Panc1 (cell line): ENCODE measurements at regions of chr1 and their contacts with region 1.

Region 1: GRCh38 chr1:36099681-36100341 is 11.1 kb downstream of the ADPRS start:
- DNase-seq: no peak
- ATAC-seq: peak; percentile 95
- H3K4me3 ChIP-seq: peak overlapping the region in 1 of 2 experiments; percentile 52; a peak in 2 of 4 replicates
- H3K27ac ChIP-seq: peak overlapping the region; percentile 63; the same call in 1 of the 2 replicates
- H3K4me1 ChIP-seq: peaks cover 3% of the 10 kb centered on the region; the same call in 1 of the 2 replicates
- H3K27me3 ChIP-seq: no peaks in the 10 kb centered on the region
- CTCF ChIP-seq: peak; percentile 99

Region 2: GRCh38 chr1:36134505-36135329 is 34.9 kb after region 1 on chr1:
- CTCF ChIA-PET with region 1: interaction called, 12 read pairs
- POLR2A ChIA-PET with region 1: no interaction called
- in situ Hi-C with region 1: no loop called
- intact Hi-C with region 1: loop called (anchors 1 kb)
- DNase-seq: no peak
- ATAC-seq: peak; percentile 80
- H3K4me3 ChIP-seq: no peak overlapping the region
- H3K27ac ChIP-seq: no peak overlapping the region
- H3K4me1 ChIP-seq: peaks cover 3% of the 10 kb centered on the region; the same call in 1 of the 2 replicates
- H3K27me3 ChIP-seq: no peaks in the 10 kb centered on the region
- CTCF ChIP-seq: peak; percentile 87

Region 3: GRCh38 chr1:36187800-36188593 is 88.2 kb after region 1 on chr1:
- CTCF ChIA-PET with region 1: interaction called, 6 read pairs
- POLR2A ChIA-PET with region 1: no interaction called
- in situ Hi-C with region 1: no loop called
- intact Hi-C with region 1: loop called (anchors 5 kb)
- DNase-seq: peak; percentile 81
- ATAC-seq: peak; percentile 97
- H3K4me3 ChIP-seq: peak overlapping the region in 1 of 2 experiments; percentile 21; a peak in 1 of 4 replicates
- H3K27ac ChIP-seq: peak overlapping the region; percentile 82
- H3K4me1 ChIP-seq: peaks cover 9% of the 10 kb centered on the region
- H3K27me3 ChIP-seq: no peaks in the 10 kb centered on the region
- CTCF ChIP-seq: peak; percentile 91